ENCODE measurements at regions of chr12 and their contacts with region 1.

Region 1: GRCh38 chr12:27332407-27333301 is at the start of gene BMAL2:
- DNase-seq: peak; percentile 46
- H3K4me3 Mint-ChIP-seq: peak within 1 kb of the TSS; percentile 99
- H3K27ac Mint-ChIP-seq: peak within 1 kb of the TSS; percentile 96
- H3K4me1 Mint-ChIP-seq: peaks cover 67% of the 10 kb centered on the region
- H3K27me3 Mint-ChIP-seq: no peaks in the 10 kb centered on the region
- total RNA-seq, gene BMAL2: 57.2 and 58.0 TPM in 2 replicates

Region 2: DNA sequence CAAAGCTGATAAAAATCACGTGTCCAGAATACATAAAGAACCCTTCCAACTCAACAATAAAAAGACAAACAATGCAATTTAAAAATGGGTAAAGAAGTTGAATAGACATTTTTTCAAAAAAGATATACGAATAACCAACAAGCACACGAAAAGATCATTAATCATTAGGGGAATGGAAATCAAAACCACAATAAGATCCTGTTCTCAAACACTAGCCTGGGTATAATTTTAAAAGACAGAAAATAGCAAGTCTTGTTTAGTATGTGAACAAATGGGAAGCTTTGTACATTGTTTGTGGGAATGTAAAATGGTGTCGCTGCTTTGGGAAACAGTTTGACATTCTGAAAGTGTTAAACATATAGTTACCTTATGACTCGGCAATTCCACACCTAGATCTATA is 1693.2 kb before region 1 on chr12:
- intact Hi-C with region 1: no loop called
- DNase-seq: no peak
- H3K4me3 Mint-ChIP-seq: no peak overlapping the region
- H3K27ac Mint-ChIP-seq: no peak overlapping the region
- H3K4me1 Mint-ChIP-seq: no peaks in the 10 kb centered on the region
- H3K27me3 Mint-ChIP-seq: peaks cover 9% of the 10 kb centered on the region

Region 3: GRCh38 chr12:26126340-26127284 is 1206.0 kb before region 1 on chr12:
- intact Hi-C with region 1: loop called (anchors 10 kb)
- DNase-seq: peak; percentile 6
- H3K4me3 Mint-ChIP-seq: peak overlapping the region; percentile 81
- H3K27ac Mint-ChIP-seq: no peak overlapping the region
- H3K4me1 Mint-ChIP-seq: peaks cover 36% of the 10 kb centered on the region
- H3K27me3 Mint-ChIP-seq: peaks cover 71% of the 10 kb centered on the region

Region 4: GRCh38 chr12:27014085-27014858 is 318.4 kb before region 1 on chr12 and contains the start of gene TM7SF3:
- intact Hi-C with region 1: loop called (anchors 1 kb)
- DNase-seq: peak; percentile 94
- H3K4me3 Mint-ChIP-seq: peak within 1 kb of the TSS; percentile 91
- H3K27ac Mint-ChIP-seq: peak within 1 kb of the TSS; percentile 90
- H3K4me1 Mint-ChIP-seq: peaks cover 61% of the 10 kb centered on the region
- H3K27me3 Mint-ChIP-seq: peaks cover 2% of the 10 kb centered on the region
- total RNA-seq, gene TM7SF3: 43.5 and 47.0 TPM in 2 replicates

Region 5: DNA sequence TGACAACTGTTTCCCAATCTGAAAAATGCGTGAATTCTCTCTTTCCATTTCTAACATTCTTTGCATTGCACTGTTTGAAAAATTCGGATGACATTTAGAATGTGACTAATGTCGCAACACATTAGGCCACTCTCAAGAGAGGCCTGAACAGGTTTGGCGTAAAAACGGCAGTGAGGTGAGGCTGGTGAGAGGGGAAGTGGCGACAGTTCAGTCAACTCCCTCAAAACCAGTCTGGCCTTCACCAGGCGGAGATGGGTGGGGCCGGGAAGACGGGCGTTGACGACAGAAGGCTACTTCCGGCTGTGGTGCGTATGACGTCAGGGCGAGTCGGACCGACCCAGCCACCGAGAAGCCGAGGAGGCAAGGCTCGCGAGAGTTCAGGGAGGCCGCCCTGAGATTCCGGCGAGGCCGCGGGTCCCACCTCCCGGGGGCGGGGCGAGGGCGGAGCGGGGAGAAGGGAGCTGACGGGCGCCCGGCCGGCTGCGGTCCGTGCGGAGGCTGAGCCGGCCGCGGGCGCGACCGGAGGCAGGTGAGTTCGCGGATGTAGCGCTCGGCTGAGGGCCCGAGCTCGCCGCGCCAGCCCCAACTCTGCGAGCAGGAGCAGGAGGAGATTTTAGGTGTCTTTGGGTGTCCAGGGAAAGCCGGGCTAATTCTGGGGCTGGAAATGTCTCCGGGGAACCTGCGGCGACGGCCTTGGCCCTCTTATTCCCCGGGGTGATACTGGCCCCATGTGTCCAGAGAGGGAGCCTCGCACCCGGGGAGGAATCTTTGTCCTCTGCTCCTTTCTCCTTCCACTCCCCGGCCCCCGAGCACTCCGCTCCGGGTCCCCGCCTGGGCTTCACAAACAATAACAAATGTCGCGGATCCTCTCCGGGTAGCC is 88.6 kb before region 1 on chr12 and contains the start of gene STK38L:
- intact Hi-C with region 1: loop called (anchors 2 kb)
- DNase-seq: peak; percentile 96
- H3K4me3 Mint-ChIP-seq: peak within 1 kb of the TSS; percentile 100
- H3K27ac Mint-ChIP-seq: peak within 1 kb of the TSS; percentile 99
- H3K4me1 Mint-ChIP-seq: peaks cover 60% of the 10 kb centered on the region
- H3K27me3 Mint-ChIP-seq: no peaks in the 10 kb centered on the region
- total RNA-seq, gene STK38L: 20.5 and 23.3 TPM in 2 replicates

Region 6: GRCh38 chr12:27523642-27524493 is 191.2 kb after region 1 on chr12 and contains the start of gene PPFIBP1:
- intact Hi-C with region 1: loop called (anchors 2 kb)
- DNase-seq: peak; percentile 83
- H3K4me3 Mint-ChIP-seq: peak within 1 kb of the TSS; percentile 89
- H3K27ac Mint-ChIP-seq: peak within 1 kb of the TSS; percentile 90
- H3K4me1 Mint-ChIP-seq: peaks cover 56% of the 10 kb centered on the region
- H3K27me3 Mint-ChIP-seq: peaks cover 19% of the 10 kb centered on the region
- total RNA-seq, gene PPFIBP1: 53.8 and 55.7 TPM in 2 replicates

Region 7: DNA sequence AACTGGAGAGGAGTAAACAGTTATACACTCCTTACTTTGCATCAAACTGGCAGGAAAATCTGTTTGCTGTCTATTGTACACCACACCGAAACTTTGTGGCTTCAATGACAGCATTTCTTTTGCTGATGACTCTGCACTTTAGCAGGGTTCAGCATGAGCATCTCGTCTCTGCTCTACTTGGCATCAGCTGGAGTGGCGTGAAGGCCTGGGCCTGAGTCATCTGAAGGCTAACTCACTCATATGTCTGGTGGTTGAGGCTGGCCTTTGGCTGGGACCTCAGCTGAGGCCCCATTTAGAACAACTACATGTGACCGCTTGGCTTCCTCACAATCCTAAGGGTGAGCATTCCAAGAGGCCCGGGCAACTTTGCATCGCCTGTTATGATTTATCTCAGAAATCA is 334.9 kb after region 1 on chr12:
- intact Hi-C with region 1: no loop called
- DNase-seq: no peak
- H3K4me3 Mint-ChIP-seq: no peak overlapping the region
- H3K27ac Mint-ChIP-seq: no peak overlapping the region
- H3K4me1 Mint-ChIP-seq: no peaks in the 10 kb centered on the region
- H3K27me3 Mint-ChIP-seq: no peaks in the 10 kb centered on the region

Region 8: GRCh38 chr12:27710592-27711316 is 378.1 kb after region 1 on chr12 and contains the start of gene MRPS35:
- intact Hi-C with region 1: loop called (anchors 2 kb)
- DNase-seq: peak; percentile 89
- H3K4me3 Mint-ChIP-seq: peak within 1 kb of the TSS; percentile 97
- H3K27ac Mint-ChIP-seq: peak within 1 kb of the TSS; percentile 96
- H3K4me1 Mint-ChIP-seq: peaks cover 26% of the 10 kb centered on the region
- H3K27me3 Mint-ChIP-seq: peaks cover 10% of the 10 kb centered on the region
- total RNA-seq, gene MRPS35: 59.8 and 72.2 TPM in 2 replicates